ENCODE measurements at regions of chr9 and their contacts with region 1.

Region 1: DNA sequence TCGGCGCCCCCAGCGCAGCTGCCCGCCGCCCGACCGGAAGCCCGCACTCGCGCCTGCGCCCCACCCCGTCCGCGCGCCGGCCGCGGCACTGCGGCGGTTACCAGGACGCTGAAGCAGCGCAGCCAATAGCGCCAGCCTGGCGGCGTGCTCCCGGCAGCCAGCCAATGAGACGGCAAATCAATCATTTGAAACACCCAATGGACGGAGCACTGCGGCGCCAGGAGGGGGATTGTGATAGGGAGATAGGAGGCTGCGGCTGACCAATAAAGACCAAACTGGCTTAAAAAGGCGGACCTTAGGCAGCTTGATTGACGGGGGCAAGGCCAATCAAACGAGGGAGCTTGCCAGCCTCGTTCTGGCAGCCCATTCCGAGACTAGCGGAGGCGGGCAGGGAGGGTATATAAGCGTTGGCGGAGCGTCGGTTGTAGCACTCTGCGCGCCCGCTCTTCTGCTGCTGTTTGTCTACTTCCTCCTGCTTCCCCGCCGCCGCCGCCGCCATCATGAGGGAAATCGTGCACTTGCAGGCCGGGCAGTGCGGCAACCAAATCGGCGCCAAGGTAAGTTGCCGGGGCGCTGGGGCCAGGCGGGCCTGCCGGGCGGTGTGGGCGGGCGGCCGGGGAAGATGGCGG is at the start of gene TUBB4B:
- DNase-seq: peak; percentile 98 to 100 (median 99)
- H3K4me3 ChIP-seq: peak within 1 kb of the TSS; percentile 17 to 63
- H3K4me3 Mint-ChIP-seq: peak within 1 kb of the TSS; percentile 83 to 93 (median 92)
- H3K27ac ChIP-seq: peak within 1 kb of the TSS; percentile 75
- H3K27ac Mint-ChIP-seq: peak within 1 kb of the TSS; percentile 89 to 97 (median 94)
- H3K4me1 ChIP-seq: peaks cover 40% of the 10 kb centered on the region
- H3K4me1 Mint-ChIP-seq: peaks cover 6 to 43% (median 25%) of the 10 kb centered on the region in 4 donors
- H3K27me3 ChIP-seq: no peaks in the 10 kb centered on the region
- H3K27me3 Mint-ChIP-seq: peaks cover 0 to 2% of the 10 kb centered on the region in 2 donors
- total RNA-seq, gene TUBB4B: 99.8 to 103 TPM

Region 2: GRCh38 chr9:136790927-136791641 is 449.9 kb before region 1 on chr9 and contains the start of gene TMEM141:
- CTCF ChIA-PET with region 1: no interaction called
- POLR2A ChIA-PET with region 1: interaction called, 8 read pairs
- intact Hi-C with region 1: loop called (anchors 1 kb)
- DNase-seq: peak; percentile 99 to 100 (median 99)
- H3K4me3 ChIP-seq: peak within 1 kb of the TSS; percentile 61 to 86
- H3K4me3 Mint-ChIP-seq: peak within 1 kb of the TSS; percentile 81 to 88 (median 85)
- H3K27ac ChIP-seq: peak within 1 kb of the TSS; percentile 93
- H3K27ac Mint-ChIP-seq: peak within 1 kb of the TSS; percentile 91 to 98 (median 95)
- H3K4me1 ChIP-seq: peaks cover 31% of the 10 kb centered on the region
- H3K4me1 Mint-ChIP-seq: peaks cover 8 to 42% (median 24%) of the 10 kb centered on the region in 4 donors
- H3K27me3 ChIP-seq: no peaks in the 10 kb centered on the region
- H3K27me3 Mint-ChIP-seq: no peaks in the 10 kb centered on the region
- total RNA-seq, gene TMEM141: 51.1 to 53.4 TPM

Region 3: DNA sequence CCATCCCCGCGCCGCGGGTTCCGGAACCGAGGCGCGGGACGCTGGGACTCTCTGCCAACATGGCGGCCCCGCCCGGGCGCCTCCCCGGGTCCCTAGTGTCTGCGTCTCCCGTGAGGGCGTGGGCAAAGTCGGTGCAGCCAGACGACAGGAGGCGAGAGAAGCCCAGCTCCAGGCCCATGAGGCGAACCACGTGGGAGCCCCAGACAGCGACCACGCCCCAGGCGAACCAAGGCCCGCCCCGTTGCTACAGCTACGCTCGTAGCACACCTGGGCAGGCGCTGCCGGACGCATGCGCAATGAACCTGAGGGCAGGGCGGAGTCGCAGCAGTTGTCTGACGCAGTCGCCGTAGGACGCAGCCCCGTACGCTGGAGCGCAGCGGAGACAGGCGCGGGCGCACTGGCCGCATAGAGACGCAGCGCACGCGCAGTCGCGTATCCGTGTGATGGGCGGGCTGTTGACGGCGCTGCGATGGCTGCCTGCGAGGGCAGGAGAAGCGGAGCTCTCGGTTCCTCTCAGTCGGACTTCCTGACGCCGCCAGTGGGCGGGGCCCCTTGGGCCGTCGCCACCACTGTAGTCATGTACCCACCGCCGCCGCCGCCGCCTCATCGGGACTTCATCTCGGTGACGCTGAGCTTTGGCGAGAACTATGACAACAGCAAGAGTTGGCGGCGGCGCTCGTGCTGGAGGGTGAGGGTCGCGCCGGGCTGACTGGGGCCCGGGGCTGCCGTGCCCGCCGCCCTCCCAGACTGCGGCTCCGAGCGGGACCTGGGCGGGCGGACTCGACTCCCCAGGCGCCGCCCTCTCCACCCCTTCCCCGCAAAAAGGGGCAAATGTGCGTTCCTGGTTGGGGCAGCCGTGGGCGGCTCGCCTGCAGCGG is 154.2 kb before region 1 on chr9 and contains the start of gene MAN1B1:
- CTCF ChIA-PET with region 1: interaction called, 6 read pairs
- POLR2A ChIA-PET with region 1: interaction called, 44 read pairs
- intact Hi-C with region 1: no loop called
- DNase-seq: peak; percentile 98 to 100 (median 100)
- H3K4me3 ChIP-seq: peak within 1 kb of the TSS; percentile 81 to 82
- H3K4me3 Mint-ChIP-seq: peak within 1 kb of the TSS; percentile 88 to 93 (median 90)
- H3K27ac ChIP-seq: peak within 1 kb of the TSS; percentile 92
- H3K27ac Mint-ChIP-seq: peak within 1 kb of the TSS; percentile 90 to 99 (median 96)
- H3K4me1 ChIP-seq: peaks cover 29% of the 10 kb centered on the region
- H3K4me1 Mint-ChIP-seq: peaks cover 17 to 37% (median 28%) of the 10 kb centered on the region in 4 donors
- H3K27me3 ChIP-seq: no peaks in the 10 kb centered on the region
- H3K27me3 Mint-ChIP-seq: no peaks in the 10 kb centered on the region
- total RNA-seq, gene MAN1B1: 63.3 to 71.0 TPM

Region 4: GRCh38 chr9:137103206-137103999 is 137.6 kb before region 1 on chr9:
- CTCF ChIA-PET with region 1: no interaction called
- POLR2A ChIA-PET with region 1: no interaction called
- intact Hi-C with region 1: no loop called
- DNase-seq: no peak
- H3K4me3 ChIP-seq: no peak overlapping the region
- H3K4me3 Mint-ChIP-seq: no peak overlapping the region
- H3K27ac ChIP-seq: no peak overlapping the region
- H3K27ac Mint-ChIP-seq: no peak overlapping the region
- H3K4me1 ChIP-seq: no peaks in the 10 kb centered on the region
- H3K4me1 Mint-ChIP-seq: peaks cover 0 to 4% (median 0%) of the 10 kb centered on the region in 4 donors
- H3K27me3 ChIP-seq: no peaks in the 10 kb centered on the region
- H3K27me3 Mint-ChIP-seq: no peaks in the 10 kb centered on the region

Region 5: GRCh38 chr9:137129456-137130175 is 111.4 kb before region 1 on chr9:
- CTCF ChIA-PET with region 1: interaction called, 8 read pairs
- POLR2A ChIA-PET with region 1: interaction called, 37 read pairs
- intact Hi-C with region 1: no loop called
- DNase-seq: peak; percentile 89 to 92 (median 91)
- H3K4me3 ChIP-seq: peak overlapping the region in 1 of 2 donors; percentile 84
- H3K4me3 Mint-ChIP-seq: peak overlapping the region; percentile 86 to 97 (median 90)
- H3K27ac ChIP-seq: peak overlapping the region; percentile 80
- H3K27ac Mint-ChIP-seq: peak overlapping the region; percentile 82 to 99 (median 92)
- H3K4me1 ChIP-seq: peaks cover 31% of the 10 kb centered on the region
- H3K4me1 Mint-ChIP-seq: peaks cover 23 to 35% (median 30%) of the 10 kb centered on the region in 4 donors
- H3K27me3 ChIP-seq: no peaks in the 10 kb centered on the region
- H3K27me3 Mint-ChIP-seq: peaks cover 2 to 4% of the 10 kb centered on the region in 2 donors

Region 6: GRCh38 chr9:137216188-137216967 is 24.6 kb before region 1 on chr9:
- CTCF ChIA-PET with region 1: interaction called, 10 read pairs
- POLR2A ChIA-PET with region 1: interaction called, 5 read pairs
- intact Hi-C with region 1: no loop called
- DNase-seq: no peak
- H3K4me3 ChIP-seq: no peak overlapping the region
- H3K4me3 Mint-ChIP-seq: no peak overlapping the region
- H3K27ac ChIP-seq: no peak overlapping the region
- H3K27ac Mint-ChIP-seq: no peak overlapping the region
- H3K4me1 ChIP-seq: no peaks in the 10 kb centered on the region
- H3K4me1 Mint-ChIP-seq: no peaks in the 10 kb centered on the region
- H3K27me3 ChIP-seq: no peaks in the 10 kb centered on the region
- H3K27me3 Mint-ChIP-seq: no peaks in the 10 kb centered on the region

Region 7: GRCh38 chr9:137262909-137263285 is 21.9 kb after region 1 on chr9:
- CTCF ChIA-PET with region 1: interaction called, 13 read pairs
- POLR2A ChIA-PET with region 1: interaction called, 260 read pairs
- intact Hi-C with region 1: no loop called
- DNase-seq: peak in 1 of 5 donors; percentile 24
- H3K4me3 ChIP-seq: no peak overlapping the region
- H3K4me3 Mint-ChIP-seq: no peak overlapping the region
- H3K27ac ChIP-seq: no peak overlapping the region
- H3K27ac Mint-ChIP-seq: no peak overlapping the region
- H3K4me1 ChIP-seq: no peaks in the 10 kb centered on the region
- H3K4me1 Mint-ChIP-seq: peaks cover 0 to 7% (median 0%) of the 10 kb centered on the region in 4 donors
- H3K27me3 ChIP-seq: no peaks in the 10 kb centered on the region
- H3K27me3 Mint-ChIP-seq: no peaks in the 10 kb centered on the region

Region 8: DNA sequence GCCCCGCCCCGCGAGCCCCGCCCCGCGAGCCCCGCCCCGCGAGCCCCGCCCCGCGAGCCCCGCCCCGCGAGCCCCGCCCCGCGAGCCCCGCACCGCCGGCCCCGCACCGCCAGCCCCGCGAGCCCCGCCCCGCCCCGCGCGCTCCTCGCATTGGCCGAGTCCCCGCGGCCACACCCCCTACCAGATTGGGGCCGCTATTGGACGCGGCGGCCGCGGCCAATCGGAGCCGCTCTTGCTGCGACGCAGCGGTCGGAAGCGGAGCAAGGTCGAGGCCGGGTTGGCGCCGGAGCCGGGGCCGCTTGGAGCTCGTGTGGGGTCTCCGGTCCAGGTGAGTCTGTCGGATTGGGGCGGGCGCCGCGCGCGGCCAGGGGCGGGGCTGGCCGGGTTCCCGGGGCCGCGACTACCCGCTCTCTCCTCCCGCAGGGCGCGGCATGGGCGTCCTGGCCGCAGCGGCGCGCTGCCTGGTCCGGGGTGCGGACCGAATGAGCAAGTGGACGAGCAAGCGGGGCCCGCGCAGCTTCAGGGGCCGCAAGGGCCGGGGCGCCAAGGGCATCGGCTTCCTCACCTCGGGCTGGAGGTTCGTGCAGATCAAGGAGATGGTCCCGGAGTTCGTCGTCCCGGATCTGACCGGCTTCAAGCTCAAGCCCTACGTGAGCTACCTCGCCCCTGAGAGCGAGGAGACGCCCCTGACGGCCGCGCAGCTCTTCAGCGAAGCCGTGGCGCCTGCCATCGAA is 310.8 kb after region 1 on chr9 and contains the start of gene MRPL41:
- CTCF ChIA-PET with region 1: no interaction called
- POLR2A ChIA-PET with region 1: interaction called, 3 read pairs
- intact Hi-C with region 1: loop called (anchors 2 kb)
- DNase-seq: peak; percentile 78 to 86 (median 84)
- H3K4me3 ChIP-seq: peak within 1 kb of the TSS; percentile 42 to 80
- H3K4me3 Mint-ChIP-seq: peak within 1 kb of the TSS; percentile 80 to 92 (median 88)
- H3K27ac ChIP-seq: peak within 1 kb of the TSS; percentile 71
- H3K27ac Mint-ChIP-seq: peak within 1 kb of the TSS; percentile 36 to 93 (median 89)
- H3K4me1 ChIP-seq: peaks cover 15% of the 10 kb centered on the region
- H3K4me1 Mint-ChIP-seq: peaks cover 9 to 23% (median 16%) of the 10 kb centered on the region in 4 donors
- H3K27me3 ChIP-seq: no peaks in the 10 kb centered on the region
- H3K27me3 Mint-ChIP-seq: no peaks in the 10 kb centered on the region
- total RNA-seq, gene MRPL41: 91.6 to 95.9 TPM